Gastrocnemius medialis (tissue), 4 donors: ENCODE measurements at regions of chr1 and their contacts with region 1.

Region 1: DNA sequence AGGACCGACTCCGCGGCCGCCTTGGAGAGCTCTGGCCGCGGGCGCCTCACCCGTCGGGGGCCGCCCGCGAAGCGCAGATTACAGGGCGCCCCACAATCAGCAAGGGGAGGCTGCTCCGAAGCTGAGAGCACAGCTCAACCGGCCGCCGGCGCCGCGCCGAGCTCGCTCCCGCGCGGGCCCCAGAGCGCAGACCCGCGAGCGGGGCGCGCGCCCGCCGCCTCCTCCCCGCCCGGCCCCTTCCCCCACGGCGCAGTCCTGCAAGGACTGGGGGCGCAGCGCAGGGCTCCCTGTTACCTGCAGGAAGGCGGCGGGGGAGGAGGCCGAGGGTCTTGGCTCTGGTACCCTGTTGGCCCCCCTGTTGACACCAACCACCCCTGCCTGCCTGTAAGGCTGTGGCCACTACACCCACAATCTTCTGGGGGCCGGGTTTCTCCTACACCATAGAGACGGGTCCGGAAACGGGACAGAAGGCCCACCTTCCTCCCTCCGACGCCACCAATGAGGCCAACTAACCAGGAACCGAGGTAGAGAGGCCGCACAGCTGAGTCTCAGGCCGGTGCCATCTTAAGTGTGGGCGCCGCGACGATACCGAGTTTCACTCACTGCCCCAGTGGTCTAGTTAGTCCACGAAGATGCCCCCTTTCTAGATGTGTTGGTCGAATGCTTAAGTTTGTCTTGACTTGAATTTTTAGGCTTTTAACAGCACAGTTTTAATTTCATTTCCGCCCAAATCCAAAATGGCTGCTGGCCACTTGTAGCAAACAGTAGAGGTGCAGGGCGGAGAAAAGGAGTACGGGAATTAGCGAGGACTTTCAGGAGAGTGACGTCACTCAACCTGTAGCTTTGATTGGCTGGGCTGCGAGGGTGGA is at the start of gene SCYL3:
- DNase-seq: peak; percentile 94
- ATAC-seq: peak; percentile 98 to 99
- H3K4me3 ChIP-seq: peak within 1 kb of the TSS; percentile 74 to 99 (median 96)
- H3K27ac ChIP-seq: peak within 1 kb of the TSS; percentile 87 to 98 (median 94)
- H3K4me1 ChIP-seq: peaks cover 11 to 24% of the 10 kb centered on the region in 2 donors
- H3K27me3 ChIP-seq: peaks cover 0 to 3% (median 0%) of the 10 kb centered on the region in 3 donors
- CTCF ChIP-seq: no peak
- POLR2A ChIP-seq: peak; percentile 48 to 63
- total RNA-seq, gene SCYL3: 6.2 to 14.3 (median 12.8) TPM

Region 2: GRCh38 chr1:169794530-169795416 is 99.0 kb before region 1 on chr1 and contains the start of gene METTL18:
- in situ Hi-C with region 1: loop called in 1 of 4 experiments (anchors 10 kb)
- intact Hi-C with region 1: loop called (anchors 2 kb)
- DNase-seq: peak; percentile 79 to 86
- ATAC-seq: peak; percentile 100
- H3K4me3 ChIP-seq: peak within 1 kb of the TSS; percentile 75 to 86 (median 80)
- H3K27ac ChIP-seq: peak within 1 kb of the TSS; percentile 87 to 92 (median 91)
- H3K4me1 ChIP-seq: peaks cover 18 to 20% of the 10 kb centered on the region in 2 donors
- H3K27me3 ChIP-seq: no peaks in the 10 kb centered on the region
- CTCF ChIP-seq: peak in 1 of 5 experiments; percentile 11
- POLR2A ChIP-seq: peak in 1 of 2 donors; percentile 27
- total RNA-seq, gene METTL18: 1.1 to 3.6 (median 2.7) TPM

Region 3: DNA sequence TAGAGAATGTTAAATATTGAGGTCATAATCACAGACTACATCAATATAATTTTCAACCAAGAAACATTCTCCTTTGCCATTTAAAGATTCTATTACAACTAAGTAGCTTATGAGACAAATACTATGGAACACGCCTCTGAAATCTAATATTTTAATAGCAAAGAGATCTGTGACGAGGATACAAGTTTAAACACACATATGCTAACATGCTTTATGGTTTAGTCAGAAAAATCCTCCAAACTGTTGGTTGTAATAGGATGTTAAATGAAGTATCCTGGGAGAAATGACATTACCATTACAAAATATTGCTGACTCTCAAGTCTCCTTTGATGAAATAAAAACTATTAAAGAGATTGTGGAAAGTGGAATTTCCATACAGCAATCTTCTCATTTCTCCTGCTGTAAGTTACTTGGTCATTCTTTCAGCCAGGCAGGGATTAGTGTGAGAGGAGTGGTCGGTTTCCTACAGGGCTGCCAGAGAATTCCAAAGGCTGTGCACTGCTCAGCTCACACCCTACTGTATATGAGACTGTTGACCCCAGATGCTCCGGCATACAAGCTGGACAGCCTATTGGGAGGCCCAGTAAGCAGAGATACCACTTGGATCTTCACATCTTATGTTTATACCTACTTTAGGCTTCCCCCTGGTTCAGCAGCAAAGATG is 26.6 kb before region 1 on chr1:
- in situ Hi-C with region 1: no loop called
- intact Hi-C with region 1: no loop called
- DNase-seq: no peak
- ATAC-seq: no peak
- H3K4me3 ChIP-seq: no peak overlapping the region
- H3K27ac ChIP-seq: no peak overlapping the region
- H3K4me1 ChIP-seq: no peaks in the 10 kb centered on the region
- H3K27me3 ChIP-seq: no peaks in the 10 kb centered on the region
- CTCF ChIP-seq: no peak
- POLR2A ChIP-seq: no peak

Region 4: GRCh38 chr1:170044187-170044586 is 150.5 kb after region 1 on chr1:
- in situ Hi-C with region 1: no loop called
- intact Hi-C with region 1: no loop called
- DNase-seq: no peak
- ATAC-seq: no peak
- H3K4me3 ChIP-seq: no peak overlapping the region
- H3K27ac ChIP-seq: no peak overlapping the region
- H3K4me1 ChIP-seq: no peaks in the 10 kb centered on the region
- H3K27me3 ChIP-seq: no peaks in the 10 kb centered on the region
- CTCF ChIP-seq: no peak
- POLR2A ChIP-seq: no peak

Region 5: GRCh38 chr1:170978371-170978910 is 1084.7 kb after region 1 on chr1:
- in situ Hi-C with region 1: no loop called
- intact Hi-C with region 1: no loop called
- DNase-seq: no peak
- ATAC-seq: no peak
- H3K4me3 ChIP-seq: no peak overlapping the region
- H3K27ac ChIP-seq: no peak overlapping the region
- H3K4me1 ChIP-seq: no peaks in the 10 kb centered on the region
- H3K27me3 ChIP-seq: no peaks in the 10 kb centered on the region
- CTCF ChIP-seq: no peak
- POLR2A ChIP-seq: no peak